GM18951 (cell line): ENCODE measurements at regions of chr10 and their contacts with region 1.

Region 1: DNA sequence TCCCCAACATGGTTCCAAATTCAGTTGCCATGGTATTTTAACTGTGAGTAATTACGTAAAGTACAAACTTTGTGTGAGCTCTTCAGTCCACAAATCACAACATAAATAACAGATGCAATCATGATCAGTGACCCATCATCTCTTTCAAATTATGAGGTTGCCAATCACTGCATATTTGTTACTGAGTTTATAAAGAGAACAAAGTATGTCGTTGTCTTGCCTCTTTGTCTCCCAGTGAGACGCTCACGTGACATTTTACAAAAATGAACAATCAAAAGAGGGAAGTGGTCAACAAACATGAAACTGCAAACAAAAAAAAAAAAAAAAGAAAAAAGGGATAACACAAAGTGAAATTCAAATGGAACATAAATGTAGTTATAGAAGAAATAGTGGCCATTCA is 122.7 kb upstream of the PDSS1 start:
- POLR2A ChIP-seq: no peak

Region 2: DNA sequence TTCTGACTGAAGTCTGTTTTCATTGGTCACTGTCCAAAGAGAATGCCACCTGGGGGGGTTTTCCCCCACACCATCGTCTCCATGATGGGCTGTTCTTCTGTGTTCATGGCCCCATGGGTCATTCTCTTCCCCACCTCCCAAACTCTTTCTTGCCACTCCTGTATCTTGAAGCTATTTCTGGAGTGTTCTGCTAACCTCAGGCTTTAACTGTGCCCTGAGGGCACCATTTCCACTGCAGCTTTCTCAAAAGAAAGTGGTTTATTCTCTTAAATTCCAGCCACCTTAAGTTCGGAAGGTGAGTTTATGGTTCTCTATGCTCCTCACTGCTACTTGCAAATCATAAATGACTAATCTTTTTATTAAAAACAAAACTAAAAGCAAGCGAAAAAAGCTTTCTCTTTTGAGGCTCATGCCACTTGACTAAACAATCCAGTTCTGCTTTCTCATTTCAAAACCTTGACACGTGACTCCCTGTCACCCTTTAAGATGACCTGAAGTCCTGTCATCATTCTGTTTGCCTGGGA is 144.1 kb before region 1 on chr10:
- in situ Hi-C with region 1: no loop called
- POLR2A ChIP-seq: no peak

Region 3: GRCh38 chr10:26627324-26627723 is 52.5 kb after region 1 on chr10:
- in situ Hi-C with region 1: loop called (anchors 5 kb)
- POLR2A ChIP-seq: no peak

Region 4: GRCh38 chr10:27319752-27320561 is 745.2 kb after region 1 on chr10:
- in situ Hi-C with region 1: loop called (anchors 5 kb)
- POLR2A ChIP-seq: no peak